SK-N-SH (cell line): ENCODE measurements at regions of chr11 and their contacts with region 1.

Region 1: DNA sequence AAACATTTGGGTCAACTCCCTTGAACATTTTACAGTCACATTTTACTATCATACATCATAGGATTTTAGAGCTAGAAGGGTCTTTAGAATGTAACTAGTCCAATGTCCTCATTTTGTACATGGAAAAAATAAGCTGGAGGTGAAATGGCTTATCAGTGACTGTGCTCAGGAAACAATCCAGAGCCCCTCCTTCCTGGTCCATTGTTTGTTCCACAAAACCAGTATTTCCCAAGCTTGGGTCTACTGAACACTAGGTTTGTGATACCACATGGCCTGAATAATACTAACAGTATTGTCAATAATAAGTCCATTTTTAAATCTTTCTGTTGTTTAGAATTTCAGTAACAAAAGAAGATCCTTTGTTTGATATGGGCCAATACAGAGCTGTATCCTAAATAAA is 27.1 kb downstream of the PDGFD start:
- DNase-seq: no peak
- H3K4me3 ChIP-seq: no peak overlapping the region
- H3K27ac ChIP-seq: no peak overlapping the region
- H3K4me1 ChIP-seq: peaks cover 0 to 5% of the 10 kb centered on the region in 2 experiments; a peak in 1 of 4 replicates
- H3K27me3 ChIP-seq: no peaks in the 10 kb centered on the region
- CTCF ChIP-seq: no peak
- EP300 ChIP-seq: no peak
- RAD21 ChIP-seq: no peak

Region 2: GRCh38 chr11:103920449-103920848 is 216.4 kb before region 1 on chr11:
- CTCF ChIA-PET with region 1: no interaction called
- POLR2A ChIA-PET with region 1: no interaction called
- DNase-seq: no peak
- H3K4me3 ChIP-seq: no peak overlapping the region
- H3K27ac ChIP-seq: no peak overlapping the region
- H3K4me1 ChIP-seq: peaks cover 0 to 5% of the 10 kb centered on the region in 2 experiments; a peak in 1 of 4 replicates
- H3K27me3 ChIP-seq: no peaks in the 10 kb centered on the region
- CTCF ChIP-seq: no peak
- EP300 ChIP-seq: no peak
- RAD21 ChIP-seq: no peak

Region 3: GRCh38 chr11:104148074-104148473 is 11.2 kb after region 1 on chr11:
- CTCF ChIA-PET with region 1: interaction called, 11 read pairs
- POLR2A ChIA-PET with region 1: no interaction called
- DNase-seq: no peak
- H3K4me3 ChIP-seq: no peak overlapping the region
- H3K27ac ChIP-seq: no peak overlapping the region
- H3K4me1 ChIP-seq: peaks cover 0 to 2% of the 10 kb centered on the region in 2 experiments; a peak in 2 of 4 replicates
- H3K27me3 ChIP-seq: no peaks in the 10 kb centered on the region
- CTCF ChIP-seq: no peak
- EP300 ChIP-seq: no peak
- RAD21 ChIP-seq: no peak